ENCODE measurements at regions of chr17 and their contacts with region 1.

Region 1: GRCh38 chr17:27353461-27354050 is 59.6 kb downstream of the WSB1 start:
- DNase-seq: peak; percentile 93
- ATAC-seq: peak; percentile 92
- H3K4me3 ChIP-seq: peak overlapping the region; percentile 67
- H3K27ac ChIP-seq: peak overlapping the region; percentile 81
- H3K4me1 ChIP-seq: peaks cover 17% of the 10 kb centered on the region
- H3K27me3 ChIP-seq: no peaks in the 10 kb centered on the region
- CTCF ChIP-seq: peak; percentile 72

Region 2: GRCh38 chr17:27236717-27237315 is 116.7 kb before region 1 on chr17:
- CTCF ChIA-PET with region 1: interaction called, 3 read pairs
- POLR2A ChIA-PET with region 1: interaction called, 3 read pairs
- intact Hi-C with region 1: loop called (anchors 5 kb)
- DNase-seq: peak; percentile 88
- ATAC-seq: peak; percentile 50
- H3K4me3 ChIP-seq: no peak overlapping the region
- H3K27ac ChIP-seq: no peak overlapping the region
- H3K4me1 ChIP-seq: peaks cover 26% of the 10 kb centered on the region
- H3K27me3 ChIP-seq: no peaks in the 10 kb centered on the region
- CTCF ChIP-seq: peak; percentile 82

Region 3: GRCh38 chr17:27381007-27381501 is 27.5 kb after region 1 on chr17:
- CTCF ChIA-PET with region 1: interaction called, 7 read pairs
- POLR2A ChIA-PET with region 1: interaction called, 20 read pairs
- intact Hi-C with region 1: no loop called
- DNase-seq: peak; percentile 43
- ATAC-seq: no peak
- H3K4me3 ChIP-seq: no peak overlapping the region
- H3K27ac ChIP-seq: no peak overlapping the region
- H3K4me1 ChIP-seq: peaks cover 43% of the 10 kb centered on the region
- H3K27me3 ChIP-seq: no peaks in the 10 kb centered on the region
- CTCF ChIP-seq: peak; percentile 72

Region 4: GRCh38 chr17:27430882-27431491 is 77.4 kb after region 1 on chr17:
- CTCF ChIA-PET with region 1: no interaction called
- POLR2A ChIA-PET with region 1: no interaction called
- intact Hi-C with region 1: loop called (anchors 2 kb)
- DNase-seq: peak; percentile 57
- ATAC-seq: peak; percentile 82
- H3K4me3 ChIP-seq: no peak overlapping the region
- H3K27ac ChIP-seq: no peak overlapping the region
- H3K4me1 ChIP-seq: no peaks in the 10 kb centered on the region
- H3K27me3 ChIP-seq: no peaks in the 10 kb centered on the region
- CTCF ChIP-seq: peak; percentile 66

Measured in PC-3 (cell line).